ENCODE measurements at regions of chr2 and their contacts with region 1.

Region 1: GRCh38 chr2:217510771-217511291 is 492.0 kb downstream of the TNS1 start:
- DNase-seq: peak; percentile 67 to 74
- H3K4me3 ChIP-seq: no peak overlapping the region
- H3K27ac ChIP-seq: no peak overlapping the region
- H3K4me1 ChIP-seq: peaks cover 16% of the 10 kb centered on the region
- H3K27me3 ChIP-seq: no peaks in the 10 kb centered on the region
- CTCF ChIP-seq: peak; percentile 86

Region 2: GRCh38 chr2:216519154-216519762 is 991.6 kb before region 1 on chr2:
- CTCF ChIA-PET with region 1: interaction called, 5 read pairs
- POLR2A ChIA-PET with region 1: no interaction called
- intact Hi-C with region 1: loop called (anchors 2 kb)
- DNase-seq: peak; percentile 53 to 64
- H3K4me3 ChIP-seq: no peak overlapping the region
- H3K27ac ChIP-seq: no peak overlapping the region
- H3K4me1 ChIP-seq: 0 out of 2 replicates have a peak, but pooled peaks cover 3% of the 10 kb centered on the region
- H3K27me3 ChIP-seq: no peaks in the 10 kb centered on the region
- CTCF ChIP-seq: peak; percentile 86

Region 3: DNA sequence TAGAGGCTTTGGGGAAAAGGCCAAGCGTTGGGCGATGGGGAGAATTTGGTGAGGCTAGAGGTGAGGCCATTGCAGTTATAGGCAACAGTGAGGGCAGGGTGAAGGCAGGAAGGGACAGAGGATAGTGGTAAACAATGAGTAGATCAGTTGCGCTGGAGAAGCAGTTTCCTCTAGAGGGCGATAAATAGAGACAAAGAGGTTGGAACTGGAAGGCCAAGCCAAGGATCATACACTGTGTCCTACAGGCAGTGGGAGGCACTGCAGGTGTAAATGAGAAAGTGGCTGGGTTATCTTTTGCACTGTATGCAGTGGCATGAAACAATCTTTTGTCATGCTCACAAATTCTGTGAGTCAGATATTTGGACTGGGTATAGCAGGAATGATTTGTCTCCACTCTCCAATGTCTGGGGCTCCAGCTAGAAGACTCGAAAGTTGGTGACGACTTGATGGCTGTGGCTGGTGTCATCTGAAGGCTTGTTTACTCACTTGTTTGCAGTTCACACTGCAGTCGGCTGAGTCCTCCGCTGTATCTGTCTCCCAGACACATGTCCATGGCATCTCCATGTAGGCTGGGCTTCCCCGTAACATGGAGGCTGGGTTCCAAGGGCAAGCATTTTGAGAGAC is 733.1 kb before region 1 on chr2:
- CTCF ChIA-PET with region 1: no interaction called
- POLR2A ChIA-PET with region 1: no interaction called
- intact Hi-C with region 1: loop called (anchors 10 kb)
- DNase-seq: peak; percentile 21 to 57
- H3K4me3 ChIP-seq: no peak overlapping the region
- H3K27ac ChIP-seq: no peak overlapping the region
- H3K4me1 ChIP-seq: peaks cover 13% of the 10 kb centered on the region
- H3K27me3 ChIP-seq: no peaks in the 10 kb centered on the region
- CTCF ChIP-seq: peak; percentile 61

Region 4: GRCh38 chr2:216922175-216922780 is 588.6 kb before region 1 on chr2:
- CTCF ChIA-PET with region 1: no interaction called
- POLR2A ChIA-PET with region 1: no interaction called
- intact Hi-C with region 1: no loop called
- DNase-seq: no peak
- H3K4me3 ChIP-seq: no peak overlapping the region
- H3K27ac ChIP-seq: no peak overlapping the region
- H3K4me1 ChIP-seq: 0 out of 2 replicates have a peak, but pooled peaks cover 3% of the 10 kb centered on the region
- H3K27me3 ChIP-seq: no peaks in the 10 kb centered on the region
- CTCF ChIP-seq: no peak

Region 5: GRCh38 chr2:217223222-217223930 is 287.5 kb before region 1 on chr2:
- CTCF ChIA-PET with region 1: no interaction called
- POLR2A ChIA-PET with region 1: no interaction called
- intact Hi-C with region 1: loop called (anchors 2 kb)
- DNase-seq: peak in 1 of 2 experiments; percentile 93
- H3K4me3 ChIP-seq: peak overlapping the region; percentile 17
- H3K27ac ChIP-seq: peak overlapping the region; percentile 95
- H3K4me1 ChIP-seq: peaks cover 29% of the 10 kb centered on the region
- H3K27me3 ChIP-seq: no peaks in the 10 kb centered on the region
- CTCF ChIP-seq: no peak

Region 6: DNA sequence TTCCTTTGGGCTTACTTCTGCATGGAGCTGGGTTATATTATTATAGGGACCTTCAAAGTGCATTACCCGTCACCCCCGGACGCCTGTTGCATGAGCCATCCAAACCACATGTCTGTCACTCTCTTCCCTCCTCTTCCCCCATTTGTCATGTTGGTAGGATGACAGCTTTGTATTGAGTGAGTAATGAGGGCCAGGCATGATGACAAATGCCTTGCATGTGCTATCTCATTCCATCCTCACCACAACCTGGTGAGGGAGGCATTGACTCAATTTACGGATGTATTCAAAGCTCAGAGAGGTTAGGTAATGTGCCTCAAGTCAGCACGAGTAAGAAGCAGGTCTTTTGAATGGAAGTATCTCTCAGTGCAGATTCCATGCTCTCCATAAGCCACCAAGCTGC is 140.4 kb before region 1 on chr2:
- CTCF ChIA-PET with region 1: interaction called, 4 read pairs
- POLR2A ChIA-PET with region 1: no interaction called
- intact Hi-C with region 1: loop called (anchors 1 kb)
- DNase-seq: peak; percentile 32 to 79
- H3K4me3 ChIP-seq: no peak overlapping the region
- H3K27ac ChIP-seq: no peak overlapping the region
- H3K4me1 ChIP-seq: peaks cover 53% of the 10 kb centered on the region
- H3K27me3 ChIP-seq: no peaks in the 10 kb centered on the region
- CTCF ChIP-seq: no peak

Region 7: DNA sequence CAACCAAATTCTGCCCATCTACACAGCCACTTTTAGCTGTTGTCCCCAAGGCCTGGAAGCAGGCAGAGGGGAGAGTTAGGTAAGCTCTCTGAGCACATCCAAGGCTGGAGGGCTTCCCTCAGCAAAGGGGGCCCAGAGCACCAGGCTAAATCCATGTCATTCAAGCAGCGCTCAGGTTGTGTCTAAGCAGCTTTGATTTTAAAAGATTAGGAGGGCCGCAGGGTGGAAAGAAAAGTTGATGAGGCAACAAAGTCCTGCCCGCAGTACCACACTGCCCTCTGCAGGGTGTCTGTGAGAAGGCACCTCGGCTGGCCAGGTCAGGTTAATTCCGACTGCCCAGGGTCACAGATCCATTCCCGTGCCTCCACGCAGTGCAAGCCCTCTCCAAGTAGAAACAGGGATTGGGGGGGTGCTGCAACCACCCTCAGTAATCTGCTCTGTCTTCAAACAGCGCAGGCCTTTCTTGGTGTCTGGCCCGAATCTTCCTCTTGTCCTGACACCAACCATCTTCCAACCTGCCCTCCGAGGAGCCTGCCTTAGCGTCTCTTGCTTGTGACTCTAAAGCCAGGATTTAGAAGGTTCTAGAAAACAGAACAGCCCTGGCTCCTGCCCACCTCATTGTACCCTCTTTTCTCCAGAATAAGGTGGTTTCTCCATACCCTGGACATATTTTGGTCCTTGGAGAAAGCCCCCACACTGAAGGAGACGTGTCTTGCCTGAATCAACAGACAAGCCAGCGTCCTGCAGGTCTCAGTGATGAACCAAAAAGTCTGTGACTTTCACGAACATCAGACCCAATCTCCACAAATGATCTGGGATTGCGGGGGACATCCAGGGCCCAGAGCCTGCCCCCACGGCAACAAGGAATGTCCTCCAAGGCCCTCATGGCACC is 202.8 kb after region 1 on chr2:
- CTCF ChIA-PET with region 1: interaction called, 12 read pairs
- POLR2A ChIA-PET with region 1: no interaction called
- intact Hi-C with region 1: loop called (anchors 1 kb)
- DNase-seq: peak; percentile 36 to 84
- H3K4me3 ChIP-seq: no peak overlapping the region
- H3K27ac ChIP-seq: no peak overlapping the region
- H3K4me1 ChIP-seq: peaks cover 26% of the 10 kb centered on the region
- H3K27me3 ChIP-seq: no peaks in the 10 kb centered on the region
- CTCF ChIP-seq: peak; percentile 95

Region 8: GRCh38 chr2:218093879-218094278 is 583.0 kb after region 1 on chr2:
- CTCF ChIA-PET with region 1: no interaction called
- POLR2A ChIA-PET with region 1: no interaction called
- intact Hi-C with region 1: no loop called
- DNase-seq: no peak
- H3K4me3 ChIP-seq: no peak overlapping the region
- H3K27ac ChIP-seq: no peak overlapping the region
- H3K4me1 ChIP-seq: no peaks in the 10 kb centered on the region
- H3K27me3 ChIP-seq: peaks cover 34% of the 10 kb centered on the region
- CTCF ChIP-seq: 0 out of 2 replicates have a peak, but pooled peaks have one; percentile 20